Gastrocnemius medialis (tissue), 4 donors: ENCODE measurements at regions of chr2 and their contacts with region 1.

Region 1: GRCh38 chr2:28751252-28751955 is at the start of gene PPP1CB:
- DNase-seq: peak; percentile 96 to 97
- ATAC-seq: peak; percentile 79
- H3K4me3 ChIP-seq: peak within 1 kb of the TSS; percentile 74 to 90 (median 88)
- H3K27ac ChIP-seq: peak within 1 kb of the TSS; percentile 96 to 99 (median 97)
- H3K4me1 ChIP-seq: peaks cover 49 to 57% of the 10 kb centered on the region in 2 donors
- H3K27me3 ChIP-seq: no peaks in the 10 kb centered on the region
- CTCF ChIP-seq: peak in 4 of 5 experiments; percentile 31 to 60 (median 39)
- POLR2A ChIP-seq: peak; percentile 90 to 92
- total RNA-seq, gene PPP1CB: 230 to 419 (median 317) TPM

Region 2: GRCh38 chr2:28583899-28584553 is 167.4 kb before region 1 on chr2:
- in situ Hi-C with region 1: loop called in 2 of 4 experiments (anchors 5 to 10 kb)
- intact Hi-C with region 1: no loop called
- DNase-seq: peak; percentile 95 to 97
- ATAC-seq: peak; percentile 83
- H3K4me3 ChIP-seq: peak overlapping the region in 1 of 4 donors; percentile 8
- H3K27ac ChIP-seq: peak overlapping the region; percentile 90 to 99 (median 94)
- H3K4me1 ChIP-seq: peaks cover 66% of the 10 kb centered on the region in 2 donors
- H3K27me3 ChIP-seq: no peaks in the 10 kb centered on the region
- CTCF ChIP-seq: peak in 1 of 5 experiments; percentile 12
- POLR2A ChIP-seq: peak; percentile 58 to 74

Region 3: GRCh38 chr2:28621172-28622100 is 130.0 kb before region 1 on chr2:
- in situ Hi-C with region 1: no loop called
- intact Hi-C with region 1: loop called (anchors 5 kb)
- DNase-seq: peak; percentile 75 to 82
- ATAC-seq: peak; percentile 68 to 93
- H3K4me3 ChIP-seq: peak overlapping the region in 1 of 4 donors; percentile 0
- H3K27ac ChIP-seq: peak overlapping the region; percentile 66 to 93 (median 86)
- H3K4me1 ChIP-seq: peaks cover 47 to 48% of the 10 kb centered on the region in 2 donors
- H3K27me3 ChIP-seq: no peaks in the 10 kb centered on the region
- CTCF ChIP-seq: peak in 2 of 5 experiments; percentile 4 to 34
- POLR2A ChIP-seq: peak; percentile 31 to 42

Region 4: GRCh38 chr2:28716265-28716867 is 35.0 kb before region 1 on chr2:
- in situ Hi-C with region 1: no loop called
- intact Hi-C with region 1: loop called (anchors 1 kb)
- DNase-seq: peak; percentile 71 to 77
- ATAC-seq: peak; percentile 78 to 87
- H3K4me3 ChIP-seq: peak overlapping the region in 2 of 4 donors; percentile 1
- H3K27ac ChIP-seq: peak overlapping the region; percentile 91 to 98 (median 93)
- H3K4me1 ChIP-seq: peaks cover 22 to 24% of the 10 kb centered on the region in 2 donors
- H3K27me3 ChIP-seq: no peaks in the 10 kb centered on the region
- CTCF ChIP-seq: no peak
- POLR2A ChIP-seq: peak; percentile 40 to 65

Region 5: DNA sequence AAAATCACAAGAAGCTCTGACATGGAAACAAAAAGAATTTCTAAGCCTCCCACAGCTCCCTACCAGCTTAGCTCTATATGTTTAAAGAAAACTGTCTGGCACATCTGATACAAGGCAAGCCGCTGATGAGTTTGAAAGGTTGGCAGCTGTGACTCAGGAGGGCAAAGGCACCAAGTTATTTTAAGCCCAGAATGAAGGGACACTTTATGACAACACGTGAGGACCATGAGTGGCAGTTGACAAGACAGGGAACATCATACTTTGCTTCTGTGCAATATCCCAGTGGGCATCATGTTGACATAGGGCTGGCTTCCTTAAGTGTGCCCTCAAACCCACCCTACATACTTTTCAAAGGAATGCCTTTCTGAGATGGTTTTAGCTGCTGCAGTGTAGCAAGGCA is 636.7 kb after region 1 on chr2:
- in situ Hi-C with region 1: no loop called
- intact Hi-C with region 1: no loop called
- DNase-seq: no peak
- ATAC-seq: peak; percentile 59 to 62
- H3K4me3 ChIP-seq: no peak overlapping the region
- H3K27ac ChIP-seq: no peak overlapping the region
- H3K4me1 ChIP-seq: no peaks in the 10 kb centered on the region
- H3K27me3 ChIP-seq: no peaks in the 10 kb centered on the region
- CTCF ChIP-seq: no peak
- POLR2A ChIP-seq: no peak